ENCODE measurements at regions of chr16 and their contacts with region 1.

Region 1: GRCh38 chr16:70653809-70654771 is 7.7 kb downstream of the IL34 start:
- DNase-seq: peak; percentile 86
- ATAC-seq: peak; percentile 51
- H3K4me3 ChIP-seq: peak overlapping the region; percentile 52 to 74 (median 70)
- H3K27ac ChIP-seq: no peak overlapping the region
- H3K4me1 ChIP-seq: peaks cover 39% of the 10 kb centered on the region
- H3K27me3 ChIP-seq: peaks cover 1 to 19% of the 10 kb centered on the region in 2 experiments; a peak in 4 of 5 replicates
- CTCF ChIP-seq: peak; percentile 96
- EP300 ChIP-seq: no peak
- POLR2A ChIP-seq: no peak
- RAD21 ChIP-seq: peak; percentile 85

Region 2: GRCh38 chr16:70372921-70373728 is 281.0 kb before region 1 on chr16:
- CTCF ChIA-PET with region 1: interaction called, 8 read pairs
- POLR2A ChIA-PET with region 1: no interaction called
- in situ Hi-C with region 1: loop called (anchors 5 kb)
- intact Hi-C with region 1: loop called (anchors 1 kb)
- DNase-seq: no peak
- ATAC-seq: no peak
- H3K4me3 ChIP-seq: no peak overlapping the region
- H3K27ac ChIP-seq: no peak overlapping the region
- H3K4me1 ChIP-seq: no peaks in the 10 kb centered on the region
- H3K27me3 ChIP-seq: no peaks in the 10 kb centered on the region
- CTCF ChIP-seq: no peak
- EP300 ChIP-seq: no peak
- POLR2A ChIP-seq: no peak
- RAD21 ChIP-seq: no peak

Region 3: DNA sequence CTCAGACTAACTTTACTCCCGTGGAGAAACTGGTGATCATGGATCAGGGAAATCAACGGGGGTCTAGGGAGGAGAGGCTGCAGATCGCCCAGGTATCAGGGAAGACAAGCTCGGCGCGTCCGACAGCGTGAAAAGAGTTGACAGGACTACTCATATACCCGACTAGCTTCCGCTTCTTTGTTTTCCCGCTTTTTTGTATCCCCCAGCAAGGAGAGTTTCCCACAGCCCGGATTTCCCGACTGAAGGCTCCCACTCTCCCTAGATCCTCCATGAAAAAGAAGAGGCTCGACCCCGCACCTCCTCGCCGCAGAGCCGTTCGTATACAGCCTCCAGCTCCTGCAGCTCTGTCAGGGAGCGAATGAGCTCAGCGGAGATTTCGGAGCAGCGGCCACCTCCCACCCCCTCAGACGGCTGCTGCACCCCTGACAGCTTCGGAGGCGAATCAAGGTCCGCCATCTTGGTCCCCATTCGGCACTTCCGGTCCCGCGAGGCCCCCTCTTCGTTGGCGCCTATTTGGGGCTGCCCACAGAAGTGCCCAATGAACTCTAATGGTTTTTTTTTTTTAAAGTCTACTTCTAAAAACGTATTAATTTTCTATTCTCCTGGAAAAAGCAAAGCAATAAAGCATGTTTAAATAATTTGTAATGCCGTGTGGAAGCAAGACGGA is 130.9 kb before region 1 on chr16 and contains the start of gene COG4:
- CTCF ChIA-PET with region 1: no interaction called
- POLR2A ChIA-PET with region 1: interaction called, 4 read pairs
- in situ Hi-C with region 1: no loop called
- intact Hi-C with region 1: loop called (anchors 2 kb)
- DNase-seq: peak; percentile 83
- ATAC-seq: peak; percentile 85
- H3K4me3 ChIP-seq: peak within 1 kb of the TSS; percentile 98 to 99 (median 99)
- H3K27ac ChIP-seq: peak within 1 kb of the TSS; percentile 93
- H3K4me1 ChIP-seq: peaks cover 40% of the 10 kb centered on the region
- H3K27me3 ChIP-seq: peaks cover 0 to 5% of the 10 kb centered on the region in 2 experiments; a peak in 1 of 5 replicates
- CTCF ChIP-seq: no peak
- EP300 ChIP-seq: peak in 1 of 2 experiments; percentile 3; a peak in 1 of 4 replicates
- POLR2A ChIP-seq: peak; percentile 73 to 94
- RAD21 ChIP-seq: no peak
- total RNA-seq, gene COG4: 73.8 and 85.7 TPM in 2 replicates